ENCODE measurements at regions of chr9 and their contacts with region 1.

Region 1: GRCh38 chr9:127734747-127735529 is at the start of gene TOR2A:
- DNase-seq: peak; percentile 75
- H3K4me3 ChIP-seq: peak within 1 kb of the TSS; percentile 55
- H3K27me3 ChIP-seq: peaks cover 6% of the 10 kb centered on the region
- CTCF ChIP-seq: peak; percentile 96
- polyA plus RNA-seq, gene TOR2A: 4.8 and 8.0 TPM in 2 replicates

Region 2: DNA sequence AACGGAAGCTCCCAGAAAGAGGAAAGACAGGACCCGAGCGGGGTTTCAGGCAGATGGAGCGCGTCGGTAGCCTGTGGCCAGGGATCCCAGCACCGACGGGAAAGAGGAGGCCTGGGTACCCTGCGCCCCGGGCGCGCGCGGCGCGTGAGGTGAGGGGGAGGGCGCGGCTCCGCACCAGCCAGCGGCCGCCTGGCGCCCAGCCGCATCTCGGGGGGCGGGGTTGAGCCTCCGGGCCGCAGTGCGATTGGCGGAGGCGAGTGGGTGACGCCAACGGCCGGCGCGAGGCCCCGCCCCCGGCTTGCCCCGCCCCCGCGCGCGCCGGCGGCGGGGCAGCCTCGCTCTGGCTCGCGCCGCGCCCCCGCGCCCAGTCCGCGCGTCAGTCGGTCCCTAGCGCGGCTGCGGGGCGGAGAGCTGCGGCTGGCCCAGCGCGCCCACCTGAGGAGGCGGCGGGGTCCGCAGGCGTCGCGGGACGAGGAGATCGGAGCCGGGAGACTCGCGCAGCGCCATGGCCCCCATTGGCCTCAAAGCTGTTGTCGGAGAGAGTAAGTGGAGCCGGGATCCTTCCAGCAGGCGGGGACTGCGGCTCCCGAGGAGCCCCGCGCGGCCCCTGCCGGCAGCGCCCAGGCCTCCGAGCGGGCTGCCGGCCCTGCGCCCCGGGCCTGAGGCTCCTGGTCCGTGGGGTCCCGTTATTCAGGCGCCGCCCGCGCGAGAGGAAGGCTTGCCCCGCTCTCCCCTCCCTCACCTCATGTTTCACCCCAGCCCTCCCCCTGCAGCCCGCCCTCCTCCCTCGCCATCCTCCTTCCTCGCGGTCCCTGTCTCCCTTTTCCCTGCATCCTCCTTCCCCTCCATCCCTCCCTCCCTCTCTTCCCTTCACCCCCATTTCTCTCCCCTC is 122.8 kb before region 1 on chr9 and contains the start of gene STXBP1:
- CTCF ChIA-PET with region 1: interaction called, 14 read pairs
- POLR2A ChIA-PET with region 1: no interaction called
- DNase-seq: no peak
- H3K4me3 ChIP-seq: peak within 1 kb of the TSS; percentile 86
- H3K27me3 ChIP-seq: no peaks in the 10 kb centered on the region
- CTCF ChIP-seq: no peak
- polyA plus RNA-seq, gene STXBP1: 16.2 and 18.1 TPM in 2 replicates

Region 3: DNA sequence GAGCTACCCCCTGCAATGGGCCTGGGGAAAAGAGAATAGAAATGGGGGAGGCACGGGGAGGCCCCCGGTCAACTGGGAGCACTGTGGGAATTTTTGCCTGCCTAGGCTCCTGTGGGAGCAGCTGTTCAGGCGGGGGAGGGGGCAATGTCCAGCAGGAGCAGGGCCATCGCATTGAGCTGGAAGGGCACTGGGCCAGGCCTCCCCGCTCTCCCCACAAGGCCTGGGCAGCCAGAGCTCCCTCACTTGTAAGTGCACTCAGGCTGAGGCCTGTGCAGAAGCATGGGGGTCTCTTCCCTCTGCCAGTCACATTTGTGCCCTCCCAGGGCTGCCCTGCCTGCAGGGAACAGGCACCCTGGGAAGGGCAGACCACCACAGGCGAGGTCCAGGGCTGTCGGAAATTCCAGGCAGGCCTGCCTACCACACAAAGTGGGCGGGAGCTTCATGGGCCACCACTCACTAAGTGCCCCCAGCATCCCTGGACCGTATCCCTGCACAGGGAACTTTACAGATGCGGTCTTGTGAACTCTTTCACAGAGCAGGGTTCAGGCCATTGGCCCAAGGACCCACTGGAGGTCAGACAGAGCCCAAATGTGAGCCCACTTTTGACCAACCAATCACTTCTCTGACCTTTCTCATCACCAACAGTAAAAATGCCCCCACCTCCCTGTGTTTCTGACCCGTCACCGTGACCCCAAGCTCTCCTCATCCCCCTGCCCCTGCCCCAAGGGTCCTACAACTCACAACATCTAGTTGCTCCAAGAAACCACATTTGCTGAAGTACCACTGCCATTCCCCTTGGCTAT is 29.2 kb before region 1 on chr9:
- CTCF ChIA-PET with region 1: interaction called, 10 read pairs
- POLR2A ChIA-PET with region 1: no interaction called
- DNase-seq: no peak
- H3K4me3 ChIP-seq: no peak overlapping the region
- H3K27me3 ChIP-seq: no peaks in the 10 kb centered on the region
- CTCF ChIP-seq: no peak

Region 4: DNA sequence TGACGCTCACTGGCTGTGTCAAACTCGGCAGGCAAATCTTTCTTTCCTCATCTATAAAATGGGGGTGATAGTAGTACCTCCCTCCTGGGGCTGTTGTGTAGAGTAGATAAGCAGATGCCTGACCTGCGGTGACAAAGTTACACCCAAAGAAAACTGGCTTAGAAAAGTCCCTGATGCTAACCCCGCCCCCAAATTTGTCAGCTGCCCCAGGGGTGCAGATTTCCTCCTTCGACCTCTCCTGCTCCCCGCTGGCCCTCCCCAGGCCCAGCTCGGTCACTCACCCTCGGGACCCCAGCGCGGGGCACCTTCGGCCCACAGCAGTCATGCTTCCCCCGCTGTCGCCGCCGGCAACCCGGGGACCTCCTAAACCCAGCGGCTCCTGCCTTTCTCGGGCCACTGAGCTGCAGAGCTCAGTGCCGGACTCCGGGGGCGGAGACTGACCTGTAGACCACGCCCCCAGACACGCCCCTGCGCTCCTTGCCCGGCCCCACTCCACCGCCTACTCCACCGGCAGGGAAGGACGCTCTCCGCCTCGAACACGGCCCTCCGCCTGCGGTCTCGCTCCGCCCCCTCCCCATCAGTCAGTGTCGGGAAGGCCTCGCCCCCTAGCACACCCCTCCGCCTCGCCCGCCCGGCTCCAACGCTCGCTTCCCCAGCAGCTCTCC is 36.1 kb after region 1 on chr9:
- CTCF ChIA-PET with region 1: interaction called, 10 read pairs
- POLR2A ChIA-PET with region 1: no interaction called
- DNase-seq: peak; percentile 82
- H3K4me3 ChIP-seq: peak overlapping the region; percentile 42
- H3K27me3 ChIP-seq: peaks cover 6% of the 10 kb centered on the region; the same call in 1 of the 2 replicates
- CTCF ChIP-seq: no peak

Region 5: DNA sequence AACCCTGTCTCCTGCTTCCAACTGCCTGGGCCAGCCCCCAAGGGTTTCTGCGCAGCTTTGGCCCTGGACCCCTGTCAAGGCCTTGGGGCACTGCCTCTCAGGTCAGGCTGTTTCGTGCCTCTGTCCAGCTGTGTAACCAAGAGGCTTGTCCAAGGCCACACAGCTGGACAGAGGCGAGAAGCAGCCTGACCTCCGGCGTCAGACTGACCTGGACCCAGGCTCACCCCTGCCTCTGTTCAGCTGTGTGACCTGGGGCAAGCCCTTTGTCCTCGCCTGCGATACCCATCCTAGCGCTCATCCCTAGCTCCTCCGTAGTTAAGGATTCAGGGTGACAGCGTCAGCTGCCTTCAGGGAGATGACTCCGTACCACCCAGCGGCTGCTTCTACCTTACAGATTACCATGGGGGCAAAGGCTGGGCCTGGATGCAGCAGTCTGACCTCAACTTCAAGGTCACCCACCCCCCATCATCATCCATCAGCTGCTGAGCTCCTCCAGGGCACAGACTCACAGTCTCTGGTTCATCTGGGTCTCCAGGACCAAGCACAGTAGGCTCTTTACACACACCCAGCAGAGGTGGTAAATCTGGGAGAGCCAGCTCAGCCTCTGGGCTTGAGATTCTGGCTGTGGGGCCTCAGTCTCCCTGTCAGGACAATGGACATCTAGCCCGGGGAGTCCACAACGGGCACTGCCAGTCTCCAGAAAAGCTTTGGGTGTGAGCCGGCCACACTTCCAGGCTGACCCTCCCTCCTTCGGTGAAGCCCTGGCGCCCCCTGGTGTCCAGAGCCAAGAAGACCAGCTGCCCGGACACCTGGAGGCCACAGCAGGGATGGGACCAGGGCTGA is 134.6 kb after region 1 on chr9:
- CTCF ChIA-PET with region 1: interaction called, 44 read pairs
- POLR2A ChIA-PET with region 1: no interaction called
- DNase-seq: no peak
- H3K4me3 ChIP-seq: no peak overlapping the region
- H3K27me3 ChIP-seq: no peaks in the 10 kb centered on the region
- CTCF ChIP-seq: peak; percentile 90

Region 6: DNA sequence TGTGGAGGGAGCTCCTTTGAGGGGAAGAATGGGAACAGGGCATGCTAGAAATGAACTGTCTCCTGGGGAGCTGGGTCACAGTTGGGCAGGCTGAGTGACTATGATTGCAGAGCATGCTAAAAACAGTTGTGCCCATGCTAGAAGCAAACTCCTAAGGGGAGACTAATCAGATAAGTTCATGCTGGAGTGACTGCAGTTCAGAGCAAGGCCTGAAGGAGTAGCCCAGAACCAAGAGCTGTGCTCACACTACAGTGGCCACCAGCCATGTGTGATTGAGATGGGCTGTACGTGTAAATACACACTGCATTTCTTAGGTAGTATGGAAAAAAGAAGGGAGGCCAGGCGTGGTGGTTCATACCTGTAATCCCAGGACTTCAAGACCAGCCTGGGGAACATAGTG is 152.9 kb after region 1 on chr9:
- CTCF ChIA-PET with region 1: no interaction called
- POLR2A ChIA-PET with region 1: no interaction called
- DNase-seq: no peak
- H3K4me3 ChIP-seq: no peak overlapping the region
- H3K27me3 ChIP-seq: no peaks in the 10 kb centered on the region
- CTCF ChIP-seq: 0 out of 2 replicates have a peak, but pooled peaks have one; percentile 2

Measured in BJ (cell line).